Upper lobe of right lung (tissue), 1 donor: ENCODE measurements at regions of chr19 and their contacts with region 1.

Region 1: DNA sequence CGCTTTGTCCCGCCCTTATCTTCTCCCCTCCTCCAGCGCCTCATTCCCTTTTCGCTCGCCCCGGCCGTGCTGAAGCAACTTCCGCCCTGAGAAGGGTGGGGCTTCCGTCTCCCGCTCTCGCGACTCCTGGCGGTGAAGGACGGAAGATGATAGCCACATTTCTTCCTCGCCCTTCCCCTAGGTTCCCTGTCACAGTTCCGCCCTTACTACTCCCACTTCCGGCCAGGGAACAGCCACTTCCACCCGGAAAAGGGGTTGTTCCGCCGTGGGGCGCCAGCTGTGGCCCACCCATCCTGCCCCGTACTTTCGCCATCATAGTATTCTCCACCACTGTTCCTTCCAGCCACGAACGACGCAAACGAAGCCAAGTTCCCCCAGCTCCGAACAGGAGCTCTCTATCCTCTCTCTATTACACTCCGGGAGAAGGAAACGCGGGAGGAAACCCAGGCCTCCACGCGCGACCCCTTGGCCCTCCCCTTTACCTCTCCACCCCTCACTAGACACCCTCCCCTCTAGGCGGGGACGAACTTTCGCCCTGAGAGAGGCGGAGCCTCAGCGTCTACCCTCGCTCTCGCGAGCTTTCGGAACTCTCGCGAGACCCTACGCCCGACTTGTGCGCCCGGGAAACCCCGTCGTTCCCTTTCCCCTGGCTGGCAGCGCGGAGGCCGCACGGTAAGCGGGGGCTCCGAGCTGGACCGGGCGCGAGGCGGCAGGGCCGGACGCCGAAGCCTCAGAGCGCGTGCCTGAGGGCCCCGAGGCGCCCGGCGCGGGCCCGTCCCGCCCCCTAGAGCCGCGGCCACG is at the start of gene RPS19:
- DNase-seq: peak; percentile 99
- ATAC-seq: peak; percentile 93
- H3K4me3 ChIP-seq: peak within 1 kb of the TSS; percentile 92
- H3K27ac ChIP-seq: peak within 1 kb of the TSS; percentile 92
- H3K4me1 ChIP-seq: peaks cover 37% of the 10 kb centered on the region
- H3K27me3 ChIP-seq: no peaks in the 10 kb centered on the region
- CTCF ChIP-seq: peak; percentile 67
- total RNA-seq, gene RPS19: 1,667 TPM

Region 2: GRCh38 chr19:41785653-41786052 is 74.2 kb before region 1 on chr19:
- intact Hi-C with region 1: no loop called
- DNase-seq: peak; percentile 81
- ATAC-seq: peak; percentile 96
- H3K4me3 ChIP-seq: no peak overlapping the region
- H3K27ac ChIP-seq: no peak overlapping the region
- H3K4me1 ChIP-seq: peaks cover 10% of the 10 kb centered on the region
- H3K27me3 ChIP-seq: peaks cover 12% of the 10 kb centered on the region
- CTCF ChIP-seq: peak; percentile 75

Region 3: GRCh38 chr19:41934849-41935374 is 75.1 kb after region 1 on chr19:
- intact Hi-C with region 1: loop called (anchors 10 kb)
- DNase-seq: peak; percentile 84
- ATAC-seq: peak; percentile 80
- H3K4me3 ChIP-seq: no peak overlapping the region
- H3K27ac ChIP-seq: no peak overlapping the region
- H3K4me1 ChIP-seq: peaks cover 2% of the 10 kb centered on the region
- H3K27me3 ChIP-seq: peaks cover 44% of the 10 kb centered on the region
- CTCF ChIP-seq: peak; percentile 80

Region 4: DNA sequence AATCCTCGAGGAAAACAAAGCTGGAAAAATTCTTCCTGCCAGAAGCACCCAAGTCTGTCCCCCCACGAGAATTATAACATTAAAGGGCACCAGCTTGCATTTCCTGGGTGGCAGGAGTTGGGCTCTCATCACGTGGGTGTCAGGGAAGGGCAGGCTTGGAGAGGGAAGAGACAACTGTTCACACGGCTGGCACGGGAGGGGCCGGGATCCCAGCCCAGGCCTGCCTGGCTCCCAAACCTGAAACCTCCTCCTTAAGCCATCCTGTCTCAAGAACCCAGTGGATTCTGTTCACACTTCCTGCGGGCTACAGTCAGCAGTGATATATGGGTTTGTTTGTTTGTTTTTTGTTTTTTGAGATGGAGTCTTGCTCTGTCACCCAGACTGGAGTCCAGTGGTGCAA is 198.0 kb after region 1 on chr19:
- intact Hi-C with region 1: no loop called
- DNase-seq: no peak
- ATAC-seq: no peak
- H3K4me3 ChIP-seq: no peak overlapping the region
- H3K27ac ChIP-seq: no peak overlapping the region
- H3K4me1 ChIP-seq: no peaks in the 10 kb centered on the region
- H3K27me3 ChIP-seq: no peaks in the 10 kb centered on the region
- CTCF ChIP-seq: no peak